CD4-positive, alpha-beta T cell (primary cell): ENCODE measurements at regions of chr17 and their contacts with region 1.

Region 1: DNA sequence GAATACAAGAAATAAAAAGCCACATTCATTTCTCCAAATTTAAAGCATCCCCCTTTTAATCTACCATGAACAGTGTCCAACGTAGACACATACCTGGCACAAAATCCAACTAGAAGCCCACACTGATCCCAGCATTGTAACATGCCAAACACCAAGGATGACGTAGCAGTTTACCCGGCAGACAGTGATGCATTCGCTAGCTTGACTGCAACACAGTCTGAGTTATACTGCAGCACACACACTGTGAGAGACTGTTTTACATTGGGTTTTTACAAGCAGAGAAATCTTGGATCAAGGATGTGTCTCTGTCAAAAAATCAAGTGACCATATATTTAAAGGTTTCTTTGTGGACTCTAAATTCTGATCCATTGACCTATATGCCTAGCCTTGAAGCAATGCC is 74.5 kb upstream of the C17orf78 start:
- DNase-seq: no peak
- ATAC-seq: no peak
- H3K4me3 ChIP-seq: no peak overlapping the region
- H3K4me3 Mint-ChIP-seq: no peak overlapping the region
- H3K27ac ChIP-seq: no peak overlapping the region
- H3K27ac Mint-ChIP-seq: no peak overlapping the region
- H3K4me1 ChIP-seq: no peaks in the 10 kb centered on the region
- H3K4me1 Mint-ChIP-seq: no peaks in the 10 kb centered on the region
- H3K27me3 ChIP-seq: no peaks in the 10 kb centered on the region
- H3K27me3 Mint-ChIP-seq: no peaks in the 10 kb centered on the region
- CTCF ChIP-seq: no peak

Region 2: GRCh38 chr17:37327341-37328090 is 26.2 kb after region 1 on chr17:
- CTCF ChIA-PET with region 1: no interaction called
- POLR2A ChIA-PET with region 1: no interaction called
- intact Hi-C with region 1: loop called in 1 of 2 experiments (anchors 1 kb)
- DNase-seq: no peak
- ATAC-seq: no peak
- H3K4me3 ChIP-seq: no peak overlapping the region
- H3K4me3 Mint-ChIP-seq: no peak overlapping the region
- H3K27ac ChIP-seq: no peak overlapping the region
- H3K27ac Mint-ChIP-seq: no peak overlapping the region
- H3K4me1 ChIP-seq: no peaks in the 10 kb centered on the region
- H3K4me1 Mint-ChIP-seq: peaks cover under 1% of the 10 kb centered on the region
- H3K27me3 ChIP-seq: no peaks in the 10 kb centered on the region
- H3K27me3 Mint-ChIP-seq: no peaks in the 10 kb centered on the region
- CTCF ChIP-seq: no peak